Heart left ventricle (tissue), 16 donors: ENCODE measurements at regions of chr3 and their contacts with region 1.

Region 1: GRCh38 chr3:24290596-24290995 is 204.1 kb downstream of the THRB start:
- DNase-seq: no peak
- ATAC-seq: no peak
- H3K4me3 ChIP-seq: no peak overlapping the region
- H3K27ac ChIP-seq: peak overlapping the region in 1 of 12 donors; percentile 59
- H3K4me1 ChIP-seq: peaks cover 0 to 28% (median 16%) of the 10 kb centered on the region in 12 donors
- H3K27me3 ChIP-seq: no peaks in the 10 kb centered on the region
- CTCF ChIP-seq: no peak
- POLR2A ChIP-seq: no peak

Region 2: DNA sequence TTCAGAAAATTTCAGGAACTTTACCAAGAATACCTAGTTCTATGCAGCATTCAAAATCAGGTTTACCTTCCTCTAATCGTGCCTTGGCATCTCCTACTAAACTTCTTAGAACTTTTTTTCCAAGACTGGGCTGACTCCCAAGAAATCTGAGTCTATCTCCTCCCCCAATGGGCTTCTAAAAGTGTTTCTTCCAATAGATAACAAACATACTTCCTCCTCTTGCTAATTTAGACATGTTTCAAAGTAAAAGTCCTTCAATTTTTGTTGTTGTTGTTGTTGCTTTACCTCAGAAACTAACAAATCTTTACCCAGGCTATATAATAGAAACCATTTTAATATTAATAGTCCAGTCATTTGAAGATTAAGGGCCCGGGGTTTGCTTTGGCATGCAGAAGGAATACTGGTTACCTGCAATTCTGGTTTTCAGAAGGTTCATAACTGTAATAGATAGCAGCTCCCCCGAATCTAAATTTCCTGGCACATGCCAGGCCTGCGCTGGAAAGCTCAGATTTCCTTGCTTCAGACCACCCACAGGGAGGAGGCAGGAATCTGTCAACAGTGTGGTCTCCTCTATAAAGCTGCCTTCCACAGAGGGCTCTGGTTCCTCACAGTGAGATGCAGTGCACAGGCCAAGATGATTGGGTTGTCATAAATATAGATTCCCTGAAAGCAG is 15.3 kb after region 1 on chr3:
- intact Hi-C with region 1: loop called in 1 of 10 experiments (anchors 2 kb)
- DNase-seq: no peak
- ATAC-seq: no peak
- H3K4me3 ChIP-seq: no peak overlapping the region
- H3K27ac ChIP-seq: no peak overlapping the region
- H3K4me1 ChIP-seq: peaks cover 0 to 15% (median 7%) of the 10 kb centered on the region in 12 donors
- H3K27me3 ChIP-seq: no peaks in the 10 kb centered on the region
- CTCF ChIP-seq: no peak
- POLR2A ChIP-seq: no peak